Tibial artery (tissue), 4 donors: ENCODE measurements at regions of chr3 and their contacts with region 1.

Region 1: GRCh38 chr3:126212602-126213378 is 32.4 kb upstream of the ALDH1L1 start:
- DNase-seq: peak in 1 of 2 donors; percentile 72
- H3K4me3 ChIP-seq: peak overlapping the region; percentile 50 to 64
- H3K27ac ChIP-seq: peak overlapping the region; percentile 81 to 86
- H3K4me1 ChIP-seq: peaks cover 0 to 37% (median 31%) of the 10 kb centered on the region in 4 donors
- H3K27me3 ChIP-seq: no peaks in the 10 kb centered on the region
- CTCF ChIP-seq: peak in 1 of 2 experiments; percentile 64

Region 2: GRCh38 chr3:125990253-125990970 is 222.4 kb before region 1 on chr3:
- intact Hi-C with region 1: loop called (anchors 5 kb)
- DNase-seq: peak; percentile 91 to 92
- H3K4me3 ChIP-seq: peak overlapping the region; percentile 55 to 75
- H3K27ac ChIP-seq: peak overlapping the region; percentile 77 to 86
- H3K4me1 ChIP-seq: peaks cover 0 to 8% (median 0%) of the 10 kb centered on the region in 4 donors
- H3K27me3 ChIP-seq: no peaks in the 10 kb centered on the region
- CTCF ChIP-seq: no peak

Region 3: DNA sequence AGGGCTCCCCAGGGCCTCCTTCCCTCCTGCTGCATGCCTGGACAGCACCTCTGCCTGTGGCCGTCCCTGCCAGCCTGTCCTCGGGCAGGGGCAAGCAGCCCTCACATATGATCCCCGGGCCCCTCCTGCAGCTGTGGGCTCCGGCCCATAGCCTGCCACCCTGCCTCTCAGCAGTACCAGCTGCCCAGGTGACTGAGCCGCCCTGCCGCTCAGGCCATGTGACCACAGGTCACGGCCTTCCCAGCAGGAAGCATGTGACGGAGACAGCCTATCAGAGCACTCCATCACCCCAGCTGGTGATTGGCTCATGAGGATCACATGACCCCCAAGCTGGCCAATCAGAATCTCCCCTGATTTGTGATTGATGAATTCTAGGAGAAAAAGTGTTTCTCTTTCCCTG is 56.3 kb before region 1 on chr3:
- intact Hi-C with region 1: no loop called
- DNase-seq: no peak
- H3K4me3 ChIP-seq: no peak overlapping the region
- H3K27ac ChIP-seq: no peak overlapping the region
- H3K4me1 ChIP-seq: no peaks in the 10 kb centered on the region
- H3K27me3 ChIP-seq: no peaks in the 10 kb centered on the region
- CTCF ChIP-seq: no peak